ENCODE measurements at regions of chr5 and their contacts with region 1.

Region 1: DNA sequence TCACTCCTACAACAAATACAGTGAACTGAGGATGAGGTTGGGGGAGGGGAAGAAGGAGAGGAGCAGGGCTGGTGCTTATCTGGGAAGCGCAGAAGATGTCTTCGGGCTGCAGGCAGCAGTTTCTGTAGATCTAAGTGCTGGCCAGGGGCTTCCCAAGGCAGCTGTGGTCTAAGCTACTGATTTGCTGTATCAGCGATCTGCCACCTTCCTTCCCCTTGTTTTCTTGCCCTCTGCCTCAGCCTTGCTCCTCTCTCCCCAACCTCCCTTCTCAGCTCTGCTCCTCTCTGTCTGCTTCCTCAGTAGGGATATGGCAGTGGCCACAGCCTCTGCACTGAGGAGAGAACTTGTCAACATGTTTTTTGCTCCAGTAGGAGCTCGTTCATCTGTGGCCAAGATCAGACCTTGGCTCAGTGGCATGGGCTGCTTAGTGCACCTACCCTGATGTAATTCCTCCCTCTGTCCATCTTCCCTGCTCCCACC is 42.8 kb upstream of the IL6ST start:
- DNase-seq: no peak
- H3K4me3 ChIP-seq: no peak overlapping the region
- H3K4me3 Mint-ChIP-seq: no peak overlapping the region
- H3K27ac Mint-ChIP-seq: no peak overlapping the region
- H3K4me1 ChIP-seq: peaks cover 14% of the 10 kb centered on the region
- H3K4me1 Mint-ChIP-seq: peaks cover 22% of the 10 kb centered on the region
- H3K27me3 ChIP-seq: no peaks in the 10 kb centered on the region
- H3K27me3 Mint-ChIP-seq: no peaks in the 10 kb centered on the region
- CTCF ChIP-seq: no peak

Region 2: DNA sequence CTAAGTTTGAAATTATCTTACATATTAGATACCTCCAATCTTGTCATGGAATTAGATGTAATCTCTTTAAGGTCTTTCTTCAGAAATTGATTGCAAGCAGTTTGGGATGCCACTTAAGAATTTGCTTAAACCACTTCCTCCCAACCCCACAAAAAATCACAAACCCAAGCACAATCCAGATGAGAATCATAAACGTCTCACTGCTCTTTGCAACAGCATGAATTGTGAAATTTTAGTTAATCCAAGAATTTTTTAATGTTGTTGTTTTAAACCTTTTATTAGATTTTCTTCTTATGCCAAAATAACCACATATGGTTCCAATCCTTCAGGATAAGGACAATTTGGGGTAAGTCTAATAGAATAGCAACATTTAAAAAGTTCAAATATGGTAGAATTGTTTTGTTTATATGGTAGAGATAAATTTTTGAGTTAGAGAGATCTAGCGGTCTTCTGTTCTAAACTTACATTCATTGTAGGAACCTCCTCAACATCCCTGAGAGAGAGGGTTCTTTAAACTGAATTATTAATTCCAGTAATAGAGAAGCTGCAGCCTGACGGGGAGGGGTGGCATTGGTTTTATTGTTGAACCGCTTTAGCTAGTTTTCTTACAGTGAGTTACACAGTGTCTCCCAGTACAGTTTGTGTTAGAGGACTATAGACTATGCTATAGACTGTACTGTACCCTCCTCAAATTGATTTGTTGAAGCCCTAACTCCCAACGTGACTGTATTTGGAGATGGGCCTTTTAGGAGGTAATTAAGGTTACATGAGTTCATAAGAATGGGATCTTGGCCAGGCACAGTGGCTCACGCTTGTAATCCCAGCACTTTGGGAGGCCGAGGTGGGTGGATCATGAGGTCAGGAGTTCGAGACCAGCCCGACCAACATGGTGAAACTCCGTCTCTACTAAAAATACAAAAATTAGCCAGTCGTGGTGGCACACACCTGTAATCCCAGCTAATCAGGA is 18.0 kb before region 1 on chr5:
- CTCF ChIA-PET with region 1: no interaction called
- POLR2A ChIA-PET with region 1: interaction called, 12 read pairs
- intact Hi-C with region 1: no loop called
- DNase-seq: no peak
- H3K4me3 ChIP-seq: no peak overlapping the region
- H3K4me3 Mint-ChIP-seq: no peak overlapping the region
- H3K27ac Mint-ChIP-seq: no peak overlapping the region
- H3K4me1 ChIP-seq: peaks cover 22% of the 10 kb centered on the region
- H3K4me1 Mint-ChIP-seq: peaks cover 8% of the 10 kb centered on the region
- H3K27me3 ChIP-seq: no peaks in the 10 kb centered on the region
- H3K27me3 Mint-ChIP-seq: no peaks in the 10 kb centered on the region
- CTCF ChIP-seq: no peak

Measured in Caco-2 (cell line).